Activated CD8-positive, alpha-beta T cell treated with anti-CD3 and anti-CD28 coated beads for 36 hours (primary cell): ENCODE measurements at regions of chr2 and their contacts with region 1.

Region 1: GRCh38 chr2:182980115-182980514 is 58.1 kb downstream of the NCKAP1 start:
- DNase-seq: no peak
- ATAC-seq: no peak
- H3K4me3 Mint-ChIP-seq: no peak overlapping the region
- H3K27ac Mint-ChIP-seq: no peak overlapping the region
- H3K4me1 Mint-ChIP-seq: no peaks in the 10 kb centered on the region
- H3K27me3 Mint-ChIP-seq: no peaks in the 10 kb centered on the region
- CTCF ChIP-seq: peak; percentile 89

Region 2: DNA sequence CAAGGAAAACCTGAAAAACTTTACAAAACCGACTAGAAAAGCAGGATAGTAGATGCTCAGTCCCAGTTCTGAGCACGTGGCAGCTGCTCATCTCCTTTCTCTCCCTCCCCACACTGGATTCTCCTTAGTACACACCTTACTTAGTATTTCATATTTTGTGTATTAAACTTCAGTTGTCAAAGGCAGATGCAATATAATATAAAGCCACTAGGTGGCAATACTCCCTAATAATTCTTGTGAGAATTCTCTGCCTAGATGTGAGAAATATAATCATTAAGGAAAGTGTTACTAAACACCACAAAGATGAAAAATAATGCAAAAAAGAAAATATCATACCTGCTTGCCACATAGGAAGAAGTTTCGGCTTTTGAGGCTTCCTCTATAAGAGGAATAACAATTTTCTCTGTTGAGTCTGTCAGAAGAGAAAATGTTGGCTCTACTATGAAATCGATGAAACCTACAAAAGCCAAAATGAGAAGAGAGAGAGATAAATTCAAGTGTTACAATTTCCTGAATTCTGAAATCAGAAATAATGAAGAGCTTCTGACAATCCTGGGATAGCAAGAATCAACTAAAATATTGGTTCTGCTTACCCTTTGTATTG is 793.9 kb before region 1 on chr2:
- CTCF ChIA-PET with region 1: interaction called, 11 read pairs
- POLR2A ChIA-PET with region 1: no interaction called
- intact Hi-C with region 1: loop called (anchors 5 kb)
- DNase-seq: no peak
- ATAC-seq: no peak
- H3K4me3 Mint-ChIP-seq: no peak overlapping the region
- H3K27ac Mint-ChIP-seq: no peak overlapping the region
- H3K4me1 Mint-ChIP-seq: no peaks in the 10 kb centered on the region
- H3K27me3 Mint-ChIP-seq: peaks cover 7% of the 10 kb centered on the region
- CTCF ChIP-seq: peak; percentile 68

Region 3: DNA sequence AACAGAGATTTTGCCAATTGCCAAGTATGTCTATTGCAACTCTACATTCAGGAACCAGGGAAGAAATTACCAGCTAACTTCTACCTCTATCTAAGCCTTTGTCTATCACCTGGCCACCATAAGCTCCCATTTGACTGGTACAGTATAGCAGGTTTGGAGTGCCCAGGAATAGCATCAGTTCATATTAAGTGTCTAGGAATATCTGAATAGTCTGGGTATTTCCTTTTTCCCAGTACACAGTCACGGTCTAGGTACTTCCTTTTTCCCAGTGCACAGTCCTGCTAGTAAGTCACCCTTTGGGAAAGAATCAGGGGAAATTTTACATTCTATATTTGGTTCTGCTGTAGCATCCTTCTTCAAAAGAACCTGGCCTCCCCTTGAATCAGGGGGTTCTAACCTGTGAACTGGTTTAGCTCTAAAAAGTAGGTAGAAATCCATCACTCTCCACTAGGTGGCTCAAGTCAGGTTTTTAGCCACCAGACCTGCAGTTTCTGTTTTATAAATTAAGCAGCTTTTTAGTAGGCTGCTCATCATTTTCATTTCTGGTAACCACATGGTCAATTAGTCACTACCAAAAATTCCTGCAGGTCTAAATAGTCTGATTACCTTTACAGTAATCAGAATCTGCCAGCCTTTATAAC is 313.3 kb before region 1 on chr2:
- CTCF ChIA-PET with region 1: interaction called, 26 read pairs
- POLR2A ChIA-PET with region 1: no interaction called
- intact Hi-C with region 1: loop called (anchors 5 kb)
- DNase-seq: peak; percentile 14
- ATAC-seq: peak; percentile 79
- H3K4me3 Mint-ChIP-seq: no peak overlapping the region
- H3K27ac Mint-ChIP-seq: no peak overlapping the region
- H3K4me1 Mint-ChIP-seq: no peaks in the 10 kb centered on the region
- H3K27me3 Mint-ChIP-seq: peaks cover 1% of the 10 kb centered on the region
- CTCF ChIP-seq: peak; percentile 44

Region 4: GRCh38 chr2:182763311-182763912 is 216.7 kb before region 1 on chr2:
- CTCF ChIA-PET with region 1: interaction called, 10 read pairs
- POLR2A ChIA-PET with region 1: no interaction called
- intact Hi-C with region 1: loop called (anchors 5 kb)
- DNase-seq: peak; percentile 2
- ATAC-seq: no peak
- H3K4me3 Mint-ChIP-seq: no peak overlapping the region
- H3K27ac Mint-ChIP-seq: no peak overlapping the region
- H3K4me1 Mint-ChIP-seq: peaks cover 2% of the 10 kb centered on the region
- H3K27me3 Mint-ChIP-seq: no peaks in the 10 kb centered on the region
- CTCF ChIP-seq: peak; percentile 15

Region 5: DNA sequence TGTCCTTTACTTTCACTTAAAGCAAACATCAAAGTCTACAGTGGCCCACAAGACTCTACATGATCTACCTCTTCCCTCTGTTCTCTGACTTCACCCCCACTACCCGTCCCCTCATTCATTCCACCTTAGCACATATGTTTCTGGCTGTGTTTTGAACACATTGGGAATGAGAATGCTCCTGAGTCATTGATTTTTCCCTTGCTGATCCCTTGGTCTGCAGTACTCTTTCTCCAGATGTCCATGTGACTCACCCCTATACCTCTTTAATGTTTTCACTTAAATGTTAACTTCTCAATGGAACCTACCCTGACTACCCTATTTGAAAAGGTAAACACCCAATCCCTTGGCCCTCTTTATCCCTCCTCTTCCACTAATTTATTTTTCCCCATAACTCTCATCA is 83.0 kb before region 1 on chr2:
- CTCF ChIA-PET with region 1: no interaction called
- POLR2A ChIA-PET with region 1: no interaction called
- intact Hi-C with region 1: no loop called
- DNase-seq: no peak
- ATAC-seq: no peak
- H3K4me3 Mint-ChIP-seq: no peak overlapping the region
- H3K27ac Mint-ChIP-seq: no peak overlapping the region
- H3K4me1 Mint-ChIP-seq: no peaks in the 10 kb centered on the region
- H3K27me3 Mint-ChIP-seq: no peaks in the 10 kb centered on the region
- CTCF ChIP-seq: no peak

Region 6: GRCh38 chr2:183049420-183049819 is 69.3 kb after region 1 on chr2:
- CTCF ChIA-PET with region 1: no interaction called
- POLR2A ChIA-PET with region 1: no interaction called
- intact Hi-C with region 1: no loop called
- DNase-seq: no peak
- ATAC-seq: no peak
- H3K4me3 Mint-ChIP-seq: no peak overlapping the region
- H3K27ac Mint-ChIP-seq: no peak overlapping the region
- H3K4me1 Mint-ChIP-seq: no peaks in the 10 kb centered on the region
- H3K27me3 Mint-ChIP-seq: peaks cover 22% of the 10 kb centered on the region
- CTCF ChIP-seq: no peak

Region 7: DNA sequence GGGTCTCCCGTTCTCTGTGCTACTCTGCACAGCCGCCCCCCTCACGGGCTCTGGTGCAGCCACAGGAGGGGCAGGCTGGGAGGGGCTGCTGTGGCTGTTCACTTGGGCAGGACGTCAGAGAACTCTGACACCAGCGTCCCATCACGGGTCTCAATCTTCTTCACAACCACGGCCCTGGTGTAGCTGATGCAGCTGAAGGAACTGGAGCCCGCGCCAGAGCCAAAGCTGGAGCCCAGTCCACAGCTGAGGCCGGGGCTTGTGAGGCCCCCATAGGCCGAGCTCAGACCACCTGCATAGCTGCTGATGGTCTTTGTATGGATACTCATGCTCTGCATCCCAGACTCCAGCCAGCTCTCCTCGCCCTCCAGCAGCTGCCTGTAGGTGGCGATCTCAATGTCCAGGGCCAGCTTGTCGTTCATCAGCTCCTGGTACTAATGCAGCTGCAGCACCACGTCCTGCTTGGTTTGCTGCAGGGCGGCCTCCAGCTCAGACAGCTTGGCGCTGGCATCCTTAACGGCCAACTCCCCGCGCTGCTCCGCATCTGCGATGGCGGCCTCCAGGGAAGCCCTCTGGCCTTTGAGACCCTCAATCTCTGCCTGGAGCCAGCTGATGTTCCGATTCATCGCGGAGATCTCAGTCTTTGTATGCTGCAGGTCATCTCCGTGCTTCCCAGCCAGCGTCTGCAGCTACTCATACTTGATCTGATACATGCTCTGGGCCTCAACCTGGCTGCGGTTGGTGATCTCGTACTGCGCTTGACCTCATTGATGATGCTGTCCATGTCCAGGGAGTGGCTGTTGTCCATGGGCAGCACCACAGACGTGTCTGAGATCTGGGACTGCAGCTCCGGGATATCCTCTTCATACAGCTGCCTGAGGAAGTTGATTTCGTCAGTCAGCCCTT is 91.1 kb after region 1 on chr2:
- CTCF ChIA-PET with region 1: no interaction called
- POLR2A ChIA-PET with region 1: no interaction called
- intact Hi-C with region 1: no loop called
- DNase-seq: peak; percentile 22
- ATAC-seq: no peak
- H3K4me3 Mint-ChIP-seq: no peak overlapping the region
- H3K27ac Mint-ChIP-seq: no peak overlapping the region
- H3K4me1 Mint-ChIP-seq: no peaks in the 10 kb centered on the region
- H3K27me3 Mint-ChIP-seq: peaks cover 15% of the 10 kb centered on the region
- CTCF ChIP-seq: peak; percentile 31